Tibial artery (tissue), 4 donors: ENCODE measurements at regions of chr3 and their contacts with region 1.

Region 1: DNA sequence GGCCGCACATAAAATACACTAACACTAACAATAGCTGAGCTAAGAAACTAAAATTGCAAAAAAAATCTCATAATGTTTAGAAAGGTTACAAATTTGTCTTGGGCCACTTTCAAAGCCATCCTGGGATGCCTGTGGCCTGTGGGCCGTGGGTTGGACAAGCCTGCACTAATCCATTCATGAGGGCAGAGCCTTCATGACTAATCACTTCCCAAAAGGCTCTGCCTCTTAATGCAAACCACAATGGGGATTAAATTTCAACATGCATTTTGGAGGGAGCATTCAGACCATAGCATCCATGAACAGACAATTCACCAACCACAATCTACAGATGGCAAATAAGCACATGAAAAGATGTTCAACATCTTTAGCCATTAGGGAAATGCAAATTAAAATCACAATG is 128.2 kb downstream of the SUCLG2 start:
- DNase-seq: no peak
- H3K4me3 ChIP-seq: no peak overlapping the region
- H3K27ac ChIP-seq: no peak overlapping the region
- H3K4me1 ChIP-seq: peaks cover 0 to 5% (median 0%) of the 10 kb centered on the region in 4 donors
- H3K27me3 ChIP-seq: no peaks in the 10 kb centered on the region
- CTCF ChIP-seq: no peak

Region 2: GRCh38 chr3:66537735-66538134 is 988.5 kb before region 1 on chr3:
- intact Hi-C with region 1: loop called (anchors 5 kb)
- DNase-seq: no peak
- H3K4me3 ChIP-seq: no peak overlapping the region
- H3K27ac ChIP-seq: no peak overlapping the region
- H3K4me1 ChIP-seq: no peaks in the 10 kb centered on the region
- H3K27me3 ChIP-seq: no peaks in the 10 kb centered on the region
- CTCF ChIP-seq: no peak

Region 3: GRCh38 chr3:67154429-67154828 is 371.8 kb before region 1 on chr3:
- intact Hi-C with region 1: no loop called
- DNase-seq: no peak
- H3K4me3 ChIP-seq: no peak overlapping the region
- H3K27ac ChIP-seq: no peak overlapping the region
- H3K4me1 ChIP-seq: no peaks in the 10 kb centered on the region
- H3K27me3 ChIP-seq: no peaks in the 10 kb centered on the region
- CTCF ChIP-seq: no peak

Region 4: DNA sequence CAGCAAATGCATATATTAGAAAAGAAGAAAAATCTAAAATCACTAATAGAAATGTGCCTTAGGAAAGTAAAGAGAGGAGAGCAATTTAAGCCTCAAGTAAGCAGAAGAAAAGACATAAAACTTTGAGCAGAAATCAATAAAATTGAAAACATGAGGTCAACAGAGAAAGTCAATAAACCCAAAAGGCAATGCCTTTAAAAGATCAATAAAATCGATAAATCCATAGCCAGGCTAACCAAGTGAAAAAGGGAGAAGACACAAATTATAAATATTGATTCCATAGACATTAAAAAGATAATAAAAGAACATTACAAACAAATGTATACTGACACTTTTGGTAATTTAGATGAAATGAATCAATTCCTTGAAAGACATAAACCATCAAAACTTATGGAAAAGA is 229.4 kb after region 1 on chr3:
- intact Hi-C with region 1: no loop called
- DNase-seq: no peak
- H3K4me3 ChIP-seq: no peak overlapping the region
- H3K27ac ChIP-seq: no peak overlapping the region
- H3K4me1 ChIP-seq: no peaks in the 10 kb centered on the region
- H3K27me3 ChIP-seq: no peaks in the 10 kb centered on the region
- CTCF ChIP-seq: no peak